ENCODE measurements at regions of chr3 and their contacts with region 1.

Region 1: GRCh38 chr3:195259475-195260279 is 11.3 kb downstream of the XXYLT1 start:
- DNase-seq: peak; percentile 96
- H3K4me3 Mint-ChIP-seq: peak overlapping the region; percentile 57
- H3K27ac Mint-ChIP-seq: no peak overlapping the region
- H3K4me1 Mint-ChIP-seq: peaks cover 20% of the 10 kb centered on the region
- H3K27me3 Mint-ChIP-seq: no peaks in the 10 kb centered on the region

Region 2: DNA sequence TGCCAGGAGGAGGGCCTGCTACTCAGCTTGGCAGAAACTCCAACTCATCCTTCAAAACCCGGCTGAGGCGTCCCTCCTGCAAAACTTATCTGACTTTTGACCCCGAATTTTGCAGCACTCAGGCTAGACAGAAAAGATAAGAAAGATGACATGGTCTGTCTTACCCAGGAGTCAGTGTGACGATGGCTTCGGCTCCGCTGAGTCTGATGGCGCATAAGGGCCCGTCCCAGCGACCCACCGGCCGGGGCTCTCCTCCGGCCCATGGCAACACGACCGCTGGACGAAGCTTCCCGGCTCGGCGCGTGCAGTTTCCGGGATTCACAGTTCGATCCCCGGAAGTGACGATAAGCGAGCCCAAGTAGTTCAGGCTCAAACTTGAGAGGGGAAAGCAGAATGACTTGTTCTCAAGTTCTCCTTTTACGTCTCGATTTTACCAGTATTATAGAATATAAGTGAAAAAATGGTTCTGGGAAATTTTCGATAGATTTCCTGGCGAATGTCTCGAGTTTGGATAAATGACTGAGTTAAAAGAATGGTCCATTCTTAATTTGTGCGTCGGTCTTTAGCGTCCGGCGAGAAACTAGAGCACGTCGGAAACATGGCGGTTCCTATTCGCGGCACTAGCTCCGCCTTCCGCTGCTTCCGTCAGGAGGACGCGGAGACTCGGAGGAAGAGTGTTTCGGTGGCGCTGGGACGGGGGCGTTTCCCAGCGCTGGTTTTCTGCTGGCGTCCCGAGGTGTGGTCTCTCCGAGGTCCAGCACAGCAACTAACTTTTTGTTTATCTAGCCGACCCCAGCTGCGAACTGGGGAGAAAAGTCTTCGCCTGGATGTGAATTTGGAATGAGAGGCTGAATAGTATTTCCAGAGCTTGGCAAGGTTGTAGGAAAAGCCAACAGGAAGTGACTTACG is 587.5 kb before region 1 on chr3 and contains the start of gene LSG1:
- intact Hi-C with region 1: loop called (anchors 1 kb)
- DNase-seq: peak; percentile 97
- H3K4me3 Mint-ChIP-seq: peak within 1 kb of the TSS; percentile 99
- H3K27ac Mint-ChIP-seq: peak within 1 kb of the TSS; percentile 97
- H3K4me1 Mint-ChIP-seq: peaks cover 48% of the 10 kb centered on the region
- H3K27me3 Mint-ChIP-seq: no peaks in the 10 kb centered on the region
- total RNA-seq, gene LSG1: 59.0 and 60.2 TPM in 2 replicates

Region 3: GRCh38 chr3:194682694-194683310 is 576.9 kb before region 1 on chr3:
- intact Hi-C with region 1: loop called (anchors 1 kb)
- DNase-seq: peak; percentile 91
- H3K4me3 Mint-ChIP-seq: no peak overlapping the region
- H3K27ac Mint-ChIP-seq: no peak overlapping the region
- H3K4me1 Mint-ChIP-seq: peaks cover 37% of the 10 kb centered on the region
- H3K27me3 Mint-ChIP-seq: peaks cover 34% of the 10 kb centered on the region

Region 4: GRCh38 chr3:194769020-194769643 is 490.5 kb before region 1 on chr3:
- intact Hi-C with region 1: loop called (anchors 1 kb)
- DNase-seq: peak; percentile 96
- H3K4me3 Mint-ChIP-seq: peak overlapping the region; percentile 80
- H3K27ac Mint-ChIP-seq: peak overlapping the region; percentile 83
- H3K4me1 Mint-ChIP-seq: peaks cover 10% of the 10 kb centered on the region
- H3K27me3 Mint-ChIP-seq: peaks cover 31% of the 10 kb centered on the region

Region 5: GRCh38 chr3:195129644-195130492 is 129.8 kb before region 1 on chr3:
- intact Hi-C with region 1: loop called (anchors 2 kb)
- DNase-seq: peak; percentile 64
- H3K4me3 Mint-ChIP-seq: peak overlapping the region; percentile 61
- H3K27ac Mint-ChIP-seq: peak overlapping the region; percentile 89
- H3K4me1 Mint-ChIP-seq: peaks cover 22% of the 10 kb centered on the region
- H3K27me3 Mint-ChIP-seq: no peaks in the 10 kb centered on the region

Region 6: GRCh38 chr3:195147649-195148095 is 112.0 kb before region 1 on chr3:
- intact Hi-C with region 1: loop called (anchors 5 kb)
- DNase-seq: peak; percentile 88
- H3K4me3 Mint-ChIP-seq: peak overlapping the region; percentile 78
- H3K27ac Mint-ChIP-seq: peak overlapping the region; percentile 75
- H3K4me1 Mint-ChIP-seq: peaks cover 34% of the 10 kb centered on the region
- H3K27me3 Mint-ChIP-seq: no peaks in the 10 kb centered on the region

Region 7: DNA sequence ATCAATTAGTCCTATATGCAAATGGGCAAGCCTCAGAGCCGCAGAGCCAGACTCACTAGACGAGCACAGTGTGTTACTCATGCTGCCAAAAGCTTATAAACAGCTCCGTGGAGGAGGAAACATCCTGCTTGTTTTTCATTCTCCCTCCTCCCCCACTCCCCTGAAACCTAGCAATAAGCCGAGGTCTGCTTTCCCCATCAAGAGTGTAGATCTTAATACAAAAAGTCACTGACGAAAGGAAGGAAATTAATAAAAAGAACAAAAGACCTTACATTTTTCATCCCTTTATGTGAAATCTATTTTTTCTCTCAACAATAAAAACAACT is 77.2 kb before region 1 on chr3:
- intact Hi-C with region 1: loop called (anchors 10 kb)
- DNase-seq: no peak
- H3K4me3 Mint-ChIP-seq: no peak overlapping the region
- H3K27ac Mint-ChIP-seq: no peak overlapping the region
- H3K4me1 Mint-ChIP-seq: peaks cover 43% of the 10 kb centered on the region
- H3K27me3 Mint-ChIP-seq: no peaks in the 10 kb centered on the region

Measured in activated CD4-positive, alpha-beta T cell treated with anti-CD3 and anti-CD28 coated beads, Interleukin-2, amount 10 ng/mL, durations not matched to agents 24 days and 14 days (primary cell).